Activated CD4-positive, alpha-beta memory T cell treated with anti-CD3 and anti-CD28 coated beads, Interleukin-2, amount 10 ng/mL, durations not matched to agents 7 days and 5 days (primary cell): ENCODE measurements at regions of chr11 and their contacts with region 1.

Region 1: GRCh38 chr11:14308114-14308896 is 50.7 kb downstream of the RRAS2 start:
- DNase-seq: no peak
- H3K4me3 Mint-ChIP-seq: no peak overlapping the region
- H3K27ac Mint-ChIP-seq: no peak overlapping the region
- H3K4me1 Mint-ChIP-seq: peaks cover 21% of the 10 kb centered on the region
- H3K27me3 Mint-ChIP-seq: no peaks in the 10 kb centered on the region

Region 2: DNA sequence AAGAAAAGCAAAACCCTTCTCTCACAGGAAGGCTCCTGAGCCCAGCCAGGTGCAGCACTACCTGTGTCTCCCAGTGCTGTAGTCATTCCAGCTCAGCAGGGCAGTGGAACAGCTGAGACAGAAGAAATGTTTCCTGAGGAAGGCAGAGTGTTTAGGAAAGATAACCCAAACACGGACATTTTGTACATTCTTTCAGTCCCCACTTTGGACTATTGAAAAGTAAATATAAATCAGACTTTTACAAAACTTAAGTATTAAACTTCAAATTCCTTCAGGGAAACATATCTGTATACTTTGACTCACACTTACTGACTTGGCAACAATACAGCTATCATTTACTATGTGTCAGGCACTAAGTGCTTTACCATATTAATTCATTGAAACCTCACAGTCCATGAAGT is 10.3 kb after region 1 on chr11:
- CTCF ChIA-PET with region 1: interaction called, 19 read pairs
- POLR2A ChIA-PET with region 1: interaction called, 5 read pairs
- DNase-seq: no peak
- H3K4me3 Mint-ChIP-seq: no peak overlapping the region
- H3K27ac Mint-ChIP-seq: no peak overlapping the region
- H3K4me1 Mint-ChIP-seq: peaks cover 67% of the 10 kb centered on the region
- H3K27me3 Mint-ChIP-seq: no peaks in the 10 kb centered on the region

Region 3: DNA sequence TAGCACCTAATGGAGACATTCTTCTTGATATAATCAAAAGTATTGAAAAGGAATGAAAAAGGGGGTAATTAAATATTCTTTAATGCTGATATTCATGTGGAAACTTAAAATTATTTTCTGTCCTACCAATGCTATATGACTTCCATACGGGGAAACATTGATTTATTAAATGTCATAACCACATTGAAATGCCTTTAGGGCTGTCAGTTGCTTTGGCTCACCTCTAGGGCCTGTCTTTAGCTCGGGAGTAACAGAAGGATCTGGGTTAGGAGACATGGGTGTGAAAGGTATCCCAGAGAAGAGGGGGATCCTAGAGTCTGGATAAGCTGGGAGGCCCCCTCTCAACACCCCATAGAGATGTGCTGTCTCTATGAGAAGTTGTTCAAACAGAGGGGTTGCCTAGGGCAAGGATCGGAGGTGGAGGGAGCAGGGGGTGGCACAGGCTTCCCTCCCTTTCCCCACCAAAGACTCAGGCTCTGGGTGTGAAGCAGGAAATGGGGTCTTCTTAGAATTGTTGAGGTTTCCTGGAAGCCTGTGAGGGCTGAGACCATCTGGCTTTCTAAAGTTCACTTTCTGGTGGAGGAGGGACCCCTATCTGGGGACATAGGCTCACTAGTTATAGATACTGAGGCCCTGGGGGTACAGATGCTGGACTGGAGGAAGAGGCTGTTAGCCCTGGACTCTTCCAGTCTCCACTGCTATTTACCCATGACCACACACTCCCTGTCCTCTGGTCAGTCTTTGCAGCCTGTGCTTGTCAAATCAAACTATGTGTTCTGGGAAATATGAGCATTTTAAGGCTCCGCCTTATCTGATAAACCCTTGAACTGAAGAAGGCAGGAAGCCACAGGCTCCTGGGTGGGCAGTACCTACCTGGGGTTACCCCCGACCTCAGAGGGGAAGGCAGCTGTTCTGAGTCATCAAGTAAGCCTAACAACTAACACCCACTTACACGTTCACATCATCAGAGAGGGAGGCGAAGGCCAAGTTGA is 106.5 kb after region 1 on chr11:
- CTCF ChIA-PET with region 1: interaction called, 15 read pairs
- POLR2A ChIA-PET with region 1: no interaction called
- DNase-seq: peak; percentile 88
- H3K4me3 Mint-ChIP-seq: peak overlapping the region; percentile 19
- H3K27ac Mint-ChIP-seq: peak overlapping the region; percentile 82
- H3K4me1 Mint-ChIP-seq: peaks cover 72% of the 10 kb centered on the region
- H3K27me3 Mint-ChIP-seq: no peaks in the 10 kb centered on the region

Region 4: GRCh38 chr11:14500181-14500651 is 191.9 kb after region 1 on chr11:
- CTCF ChIA-PET with region 1: no interaction called
- POLR2A ChIA-PET with region 1: no interaction called
- DNase-seq: peak; percentile 63
- H3K4me3 Mint-ChIP-seq: peak overlapping the region; percentile 98
- H3K27ac Mint-ChIP-seq: peak overlapping the region; percentile 91
- H3K4me1 Mint-ChIP-seq: peaks cover 43% of the 10 kb centered on the region
- H3K27me3 Mint-ChIP-seq: no peaks in the 10 kb centered on the region